Left cardiac atrium (tissue), 4 donors: ENCODE measurements at regions of chr1 and their contacts with region 1.

Region 1: DNA sequence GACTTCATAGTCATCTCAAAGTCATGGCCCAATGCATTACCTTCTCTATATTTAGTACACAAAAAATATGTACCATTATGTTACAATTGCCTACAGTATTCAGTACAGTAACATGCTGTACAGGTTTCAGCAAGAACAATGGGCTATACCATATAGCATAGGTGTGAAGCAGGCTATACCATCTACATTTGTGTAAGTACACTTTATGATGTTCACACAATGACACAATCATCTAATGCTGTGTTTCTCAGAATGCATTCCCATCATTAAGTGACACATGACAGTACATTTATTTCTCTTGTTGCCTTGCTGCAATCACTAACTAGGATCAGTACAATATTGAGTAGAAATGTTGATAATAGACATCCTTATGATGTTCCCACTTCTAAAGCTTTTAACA is 46.5 kb upstream of the NFIA start:
- DNase-seq: no peak
- ATAC-seq: no peak

Region 2: DNA sequence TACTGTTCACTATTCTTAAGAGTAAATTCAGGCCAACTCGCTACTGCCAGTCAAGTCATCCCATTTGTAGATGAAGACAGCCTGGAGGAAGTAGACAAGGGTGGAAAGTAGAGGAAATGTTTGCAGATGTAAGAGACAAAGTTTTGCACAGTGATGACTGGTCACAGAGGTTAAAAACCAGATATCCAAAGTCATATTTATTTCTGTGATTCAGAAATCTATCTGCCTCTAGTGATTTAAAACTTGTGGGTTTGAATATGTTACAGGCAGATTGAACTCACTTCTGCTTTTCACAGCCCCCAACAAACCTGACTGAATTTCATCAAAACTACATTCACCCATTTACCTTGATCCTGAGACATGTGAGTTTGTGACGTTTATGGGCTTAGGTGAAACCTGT is 477.6 kb before region 1 on chr1:
- intact Hi-C with region 1: no loop called
- DNase-seq: no peak
- ATAC-seq: no peak

Region 3: GRCh38 chr1:60857851-60858250 is 178.0 kb before region 1 on chr1:
- intact Hi-C with region 1: loop called (anchors 5 kb)
- DNase-seq: no peak
- ATAC-seq: no peak

Region 4: GRCh38 chr1:60960891-60961461 is 74.9 kb before region 1 on chr1:
- intact Hi-C with region 1: no loop called
- DNase-seq: peak; percentile 27
- ATAC-seq: peak; percentile 23 to 52